ENCODE measurements at regions of chr7 and their contacts with region 1.

Region 1: GRCh38 chr7:129054438-129055293 is at the start of gene TNPO3:
- DNase-seq: peak; percentile 93
- ATAC-seq: peak; percentile 91
- H3K4me3 Mint-ChIP-seq: peak within 1 kb of the TSS; percentile 96
- H3K27ac Mint-ChIP-seq: peak within 1 kb of the TSS; percentile 100
- H3K4me1 Mint-ChIP-seq: peaks cover 32% of the 10 kb centered on the region
- H3K27me3 Mint-ChIP-seq: peaks cover 13% of the 10 kb centered on the region
- total RNA-seq, gene TNPO3: 47.2 to 47.9 TPM

Region 2: GRCh38 chr7:128770233-128770632 is 284.4 kb before region 1 on chr7:
- CTCF ChIA-PET with region 1: no interaction called
- POLR2A ChIA-PET with region 1: no interaction called
- DNase-seq: no peak
- ATAC-seq: no peak
- H3K4me3 Mint-ChIP-seq: no peak overlapping the region
- H3K27ac Mint-ChIP-seq: no peak overlapping the region
- H3K4me1 Mint-ChIP-seq: no peaks in the 10 kb centered on the region
- H3K27me3 Mint-ChIP-seq: no peaks in the 10 kb centered on the region

Region 3: DNA sequence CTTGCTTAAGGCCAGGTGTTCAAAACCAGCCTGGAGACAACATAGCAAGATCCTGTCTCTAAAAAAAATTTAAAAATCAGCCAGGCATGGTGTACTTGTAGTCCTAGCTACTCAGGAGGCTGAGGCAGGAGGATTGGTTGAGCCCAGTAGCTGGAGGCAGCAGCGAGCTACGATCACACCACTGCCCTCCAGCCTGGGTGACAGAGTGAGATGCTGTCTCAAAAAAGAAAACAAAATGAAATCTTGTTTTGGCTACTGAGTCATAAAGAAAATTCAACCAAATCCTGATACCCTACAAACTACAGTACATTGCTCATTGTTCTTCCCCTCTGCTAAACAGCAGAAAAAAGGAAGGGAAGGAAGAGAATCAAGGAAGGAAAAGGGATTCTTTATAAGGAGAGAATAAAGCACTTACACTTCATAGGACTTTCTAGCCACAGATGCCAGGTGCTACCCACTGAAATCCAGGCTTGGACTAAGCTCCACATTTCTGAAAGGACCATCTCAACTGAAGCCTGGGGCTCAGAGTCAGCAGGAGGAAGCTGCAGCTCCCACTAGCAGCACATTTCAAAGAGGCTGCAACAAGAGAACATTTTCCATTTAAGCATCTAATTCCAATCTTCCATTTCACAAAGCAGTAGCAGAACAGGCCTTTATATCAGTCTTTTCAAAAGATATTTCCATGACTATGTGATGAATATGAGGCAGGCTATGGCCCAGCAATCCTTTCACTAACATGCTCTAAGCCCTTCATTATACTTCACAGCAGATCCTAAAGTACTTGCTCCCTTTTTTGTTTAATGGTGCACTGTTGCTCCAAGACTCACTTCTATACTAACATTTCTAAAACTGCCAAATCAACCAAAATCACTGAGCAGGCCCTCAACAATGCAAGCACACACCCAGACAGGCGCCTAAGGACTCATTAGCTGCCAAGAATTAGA is 13.3 kb before region 1 on chr7:
- CTCF ChIA-PET with region 1: interaction called, 5 read pairs
- POLR2A ChIA-PET with region 1: interaction called, 19 read pairs
- DNase-seq: no peak
- ATAC-seq: no peak
- H3K4me3 Mint-ChIP-seq: no peak overlapping the region
- H3K27ac Mint-ChIP-seq: no peak overlapping the region
- H3K4me1 Mint-ChIP-seq: peaks cover 30% of the 10 kb centered on the region
- H3K27me3 Mint-ChIP-seq: no peaks in the 10 kb centered on the region

Region 4: GRCh38 chr7:129066290-129067131 is 11.8 kb after region 1 on chr7:
- CTCF ChIA-PET with region 1: no interaction called
- POLR2A ChIA-PET with region 1: interaction called, 32 read pairs
- DNase-seq: no peak
- ATAC-seq: no peak
- H3K4me3 Mint-ChIP-seq: no peak overlapping the region
- H3K27ac Mint-ChIP-seq: no peak overlapping the region
- H3K4me1 Mint-ChIP-seq: peaks cover 14% of the 10 kb centered on the region
- H3K27me3 Mint-ChIP-seq: peaks cover 10% of the 10 kb centered on the region

Region 5: DNA sequence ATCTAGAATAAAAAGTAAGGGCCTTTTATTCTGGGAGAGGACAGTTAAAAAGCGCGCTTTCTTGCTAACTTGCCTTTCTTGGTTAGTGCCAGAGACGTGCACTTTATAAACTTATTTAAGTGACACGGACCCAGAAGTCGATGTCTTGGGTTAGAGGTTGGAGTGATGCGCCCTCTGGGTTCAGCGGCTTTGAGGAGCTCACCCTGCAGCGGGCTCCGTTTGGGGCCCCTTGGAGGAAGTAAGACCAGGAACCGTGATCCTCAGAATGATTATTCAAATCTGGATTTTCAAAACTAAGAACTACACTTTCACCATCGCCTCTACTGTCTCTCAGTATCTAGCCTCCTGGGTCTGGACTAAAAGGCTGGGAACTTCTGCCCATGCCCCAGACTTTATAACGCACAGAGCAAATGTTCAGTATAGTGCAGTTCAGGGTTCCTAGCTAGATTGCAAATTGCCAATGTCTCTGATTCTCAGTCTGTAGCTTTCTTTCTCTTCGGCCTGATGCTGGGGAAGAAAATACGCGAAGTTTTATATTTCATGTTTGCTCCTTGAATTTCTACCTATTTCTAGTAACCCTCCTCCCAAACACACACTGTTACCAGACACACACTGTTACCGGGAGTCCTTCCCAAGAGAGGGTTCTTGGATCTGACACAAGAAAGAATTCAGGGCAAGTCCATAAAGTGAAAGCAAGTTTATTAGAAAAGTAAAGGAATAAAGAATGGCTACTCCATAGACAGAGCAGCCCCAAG is 115.2 kb after region 1 on chr7:
- CTCF ChIA-PET with region 1: no interaction called
- POLR2A ChIA-PET with region 1: no interaction called
- DNase-seq: no peak
- ATAC-seq: no peak
- H3K4me3 Mint-ChIP-seq: peak overlapping the region; percentile 67
- H3K27ac Mint-ChIP-seq: peak overlapping the region; percentile 41
- H3K4me1 Mint-ChIP-seq: peaks cover 21% of the 10 kb centered on the region
- H3K27me3 Mint-ChIP-seq: peaks cover 5% of the 10 kb centered on the region